Heart right ventricle (tissue), 16 donors: ENCODE measurements at regions of chr7 and their contacts with region 1.

Region 1: DNA sequence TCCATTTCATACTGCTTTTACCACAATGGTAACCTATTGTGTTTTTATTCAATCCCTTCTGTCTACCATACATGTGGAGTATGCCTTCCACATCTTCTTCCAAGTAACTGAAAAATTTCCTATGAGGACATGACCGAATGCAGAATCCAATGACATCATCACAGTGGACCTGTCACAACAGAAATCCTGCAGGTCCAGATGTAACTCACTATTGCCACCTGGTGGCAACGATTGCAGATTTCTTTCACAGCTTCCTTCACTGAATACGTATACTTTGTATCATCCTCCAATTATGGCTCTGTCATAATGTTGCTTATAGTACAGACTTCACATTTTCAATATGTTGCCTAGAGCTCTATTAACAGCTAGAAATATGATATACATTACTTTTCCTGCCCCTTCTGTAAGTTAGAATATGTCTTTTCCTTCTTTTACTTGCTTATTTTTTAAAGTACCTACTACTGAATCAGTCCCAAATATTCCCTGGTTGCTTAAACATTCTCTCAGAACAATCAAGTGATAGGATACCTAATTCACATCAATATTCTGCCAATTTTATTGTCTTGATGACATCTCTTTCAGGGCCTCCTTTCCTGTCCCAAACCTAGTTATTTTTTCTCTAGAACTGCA is 45.4 kb downstream of the SLC13A1 start:
- DNase-seq: peak in 1 of 2 donors; percentile 72
- ATAC-seq: peak in 7 of 8 donors; percentile 52 to 85 (median 74)
- H3K4me3 ChIP-seq: no peak overlapping the region
- H3K27ac ChIP-seq: no peak overlapping the region
- H3K4me1 ChIP-seq: peaks cover 0 to 5% (median 0%) of the 10 kb centered on the region in 9 donors
- H3K27me3 ChIP-seq: no peaks in the 10 kb centered on the region
- CTCF ChIP-seq: peak; percentile 62 to 90 (median 78)

Region 2: DNA sequence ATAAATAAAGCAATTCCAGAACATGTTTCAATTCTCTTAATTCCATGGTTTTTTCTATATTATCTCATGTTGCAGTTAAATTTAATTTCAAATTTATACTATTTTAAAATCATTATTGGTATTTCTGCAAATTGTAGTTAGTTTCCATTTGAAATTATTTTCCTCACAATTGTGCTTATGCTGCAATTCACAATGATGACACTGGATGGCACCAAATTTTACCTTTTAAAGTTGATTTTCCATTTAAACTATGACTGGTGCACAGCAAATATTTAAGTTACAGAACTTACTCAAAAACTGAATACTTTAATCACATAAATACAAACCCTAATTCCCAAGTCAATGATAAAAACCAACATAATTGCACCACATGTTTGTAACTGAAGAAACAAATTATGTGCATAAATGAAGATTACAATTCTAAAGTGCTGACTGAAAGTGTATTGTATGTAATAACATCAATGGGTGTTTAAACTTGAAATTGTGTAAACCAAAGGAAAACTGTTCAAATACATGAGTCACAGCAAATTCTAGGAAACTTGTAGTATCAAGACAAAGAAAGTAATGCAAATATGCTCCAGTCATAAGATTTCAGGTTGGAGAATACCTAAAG is 935.0 kb before region 1 on chr7:
- intact Hi-C with region 1: loop called in 4 of 10 experiments (anchors 2 to 10 kb)
- DNase-seq: no peak
- ATAC-seq: no peak
- H3K4me3 ChIP-seq: no peak overlapping the region
- H3K27ac ChIP-seq: no peak overlapping the region
- H3K4me1 ChIP-seq: no peaks in the 10 kb centered on the region
- H3K27me3 ChIP-seq: no peaks in the 10 kb centered on the region
- CTCF ChIP-seq: peak; percentile 23 to 74 (median 59)

Region 3: DNA sequence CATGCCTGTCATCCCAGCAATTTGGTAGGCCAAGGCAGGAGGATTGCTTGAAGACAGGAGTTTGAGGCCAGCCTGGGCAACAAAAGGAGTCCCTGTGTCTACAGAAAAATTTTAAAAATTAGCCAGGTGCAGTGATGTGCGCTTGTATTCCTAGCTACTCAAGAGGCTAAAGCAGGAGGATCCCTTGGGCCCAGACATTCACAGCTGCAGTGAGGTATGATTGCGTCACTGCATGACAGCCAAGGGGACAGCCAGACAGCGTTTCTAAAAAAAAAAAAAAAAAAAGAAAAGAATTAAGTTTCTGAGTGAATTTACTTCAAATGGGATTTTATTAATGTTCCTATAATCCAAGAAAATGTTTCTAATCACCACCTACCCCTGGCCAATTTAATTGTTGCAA is 364.2 kb before region 1 on chr7:
- intact Hi-C with region 1: loop called in 1 of 10 experiments (anchors 10 kb)
- DNase-seq: no peak
- ATAC-seq: no peak
- H3K4me3 ChIP-seq: no peak overlapping the region
- H3K27ac ChIP-seq: no peak overlapping the region
- H3K4me1 ChIP-seq: no peaks in the 10 kb centered on the region
- H3K27me3 ChIP-seq: no peaks in the 10 kb centered on the region
- CTCF ChIP-seq: no peak

Region 4: GRCh38 chr7:122886357-122887081 is 267.8 kb before region 1 on chr7 and contains the start of gene CADPS2:
- intact Hi-C with region 1: loop called in 4 of 10 experiments (anchors 5 to 10 kb)
- DNase-seq: peak; percentile 84 to 90
- ATAC-seq: peak; percentile 91 to 95 (median 94)
- H3K4me3 ChIP-seq: peak within 1 kb of the TSS; percentile 57 to 88 (median 80)
- H3K27ac ChIP-seq: peak within 1 kb of the TSS; percentile 86 to 95 (median 90)
- H3K4me1 ChIP-seq: peaks cover 0 to 38% (median 5%) of the 10 kb centered on the region in 9 donors
- H3K27me3 ChIP-seq: peaks cover 0 to 44% (median 0%) of the 10 kb centered on the region in 7 donors
- CTCF ChIP-seq: peak in 6 of 9 donors; percentile 6 to 40 (median 28)
- total RNA-seq, gene CADPS2: 3.6 to 25.7 (median 6.1) TPM

Region 5: GRCh38 chr7:122984021-122984420 is 170.3 kb before region 1 on chr7:
- intact Hi-C with region 1: no loop called
- DNase-seq: no peak
- ATAC-seq: no peak
- H3K4me3 ChIP-seq: no peak overlapping the region
- H3K27ac ChIP-seq: no peak overlapping the region
- H3K4me1 ChIP-seq: no peaks in the 10 kb centered on the region
- H3K27me3 ChIP-seq: no peaks in the 10 kb centered on the region
- CTCF ChIP-seq: no peak

Region 6: GRCh38 chr7:123218866-123219265 is 64.5 kb after region 1 on chr7:
- intact Hi-C with region 1: loop called in 1 of 10 experiments (anchors 5 kb)
- DNase-seq: no peak
- ATAC-seq: no peak
- H3K4me3 ChIP-seq: no peak overlapping the region
- H3K27ac ChIP-seq: no peak overlapping the region
- H3K4me1 ChIP-seq: no peaks in the 10 kb centered on the region
- H3K27me3 ChIP-seq: no peaks in the 10 kb centered on the region
- CTCF ChIP-seq: no peak